Psoas muscle (tissue), 8 donors: ENCODE measurements at regions of chr6 and their contacts with region 1.

Region 1: GRCh38 chr6:117602151-117602898 is at the start of gene GOPC:
- DNase-seq: peak; percentile 95 to 98
- ATAC-seq: peak; percentile 99
- H3K4me3 ChIP-seq: peak within 1 kb of the TSS; percentile 89
- H3K27ac ChIP-seq: peak within 1 kb of the TSS; percentile 96
- H3K4me1 ChIP-seq: peaks cover 28% of the 10 kb centered on the region
- H3K27me3 ChIP-seq: no peaks in the 10 kb centered on the region
- CTCF ChIP-seq: no peak
- total RNA-seq, gene GOPC: 11.5 to 18.2 (median 15.6) TPM

Region 2: DNA sequence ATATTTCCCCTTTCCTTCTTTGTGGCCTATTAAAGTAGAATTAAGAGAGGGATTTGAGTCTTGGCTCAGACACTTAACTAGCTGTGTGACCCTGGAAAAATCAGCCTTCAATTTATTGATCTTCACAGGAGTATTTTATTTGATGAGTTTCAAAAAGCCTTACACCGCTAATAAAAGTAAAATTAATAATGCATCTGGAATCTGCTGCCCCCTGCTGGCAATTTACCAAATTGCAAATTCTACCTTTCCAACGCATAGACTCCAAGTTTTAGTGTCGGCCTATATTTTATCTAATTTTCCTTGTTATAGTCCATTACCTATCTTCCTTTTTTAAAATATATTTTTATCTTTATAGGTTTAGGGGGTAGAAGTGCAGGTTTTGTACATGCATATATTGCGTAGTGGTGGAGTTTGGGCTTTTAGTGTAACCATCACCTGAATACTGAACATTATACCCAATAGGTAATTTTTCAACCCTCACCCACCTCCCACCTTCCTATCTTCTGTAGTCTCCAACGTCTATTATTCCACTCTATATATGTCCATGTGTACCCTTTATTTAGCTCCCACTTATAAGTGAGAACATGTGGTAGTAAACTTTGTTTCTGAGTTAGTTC is 46.3 kb before region 1 on chr6:
- intact Hi-C with region 1: loop called in 1 of 2 experiments (anchors 5 kb)
- DNase-seq: no peak
- ATAC-seq: peak in 1 of 4 donors; percentile 73
- H3K4me3 ChIP-seq: no peak overlapping the region
- H3K27ac ChIP-seq: no peak overlapping the region
- H3K4me1 ChIP-seq: peaks cover 7% of the 10 kb centered on the region
- H3K27me3 ChIP-seq: no peaks in the 10 kb centered on the region
- CTCF ChIP-seq: peak; percentile 90

Region 3: GRCh38 chr6:118171852-118172251 is 569.5 kb after region 1 on chr6:
- intact Hi-C with region 1: no loop called
- DNase-seq: no peak
- ATAC-seq: no peak
- H3K4me3 ChIP-seq: no peak overlapping the region
- H3K27ac ChIP-seq: no peak overlapping the region
- H3K4me1 ChIP-seq: no peaks in the 10 kb centered on the region
- H3K27me3 ChIP-seq: no peaks in the 10 kb centered on the region
- CTCF ChIP-seq: no peak